Posterior vena cava (tissue), 2 donors: ENCODE measurements at regions of chr5 and their contacts with region 1.

Region 1: DNA sequence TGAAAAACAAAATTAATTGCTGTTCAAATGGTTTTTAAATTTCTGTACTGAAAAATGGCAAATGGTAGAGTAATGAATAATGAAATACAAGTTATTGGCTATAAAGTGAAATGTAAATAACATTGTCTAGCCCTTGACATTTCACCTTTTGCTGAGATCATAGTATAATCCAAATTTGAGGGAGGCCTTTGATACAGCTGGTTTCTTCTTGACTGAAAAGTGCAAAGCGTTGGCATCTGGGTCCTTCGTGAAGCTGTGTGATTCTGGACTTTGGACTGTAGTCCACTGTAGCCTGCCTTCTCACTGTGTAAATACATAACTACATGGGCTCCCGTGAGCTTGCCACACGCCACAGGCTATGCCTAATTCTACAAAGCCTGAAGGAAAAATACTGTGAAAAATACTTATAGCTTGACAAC is 52.3 kb downstream of the ARHGEF28 start:
- DNase-seq: no peak

Region 2: GRCh38 chr5:73701518-73701917 is 23.2 kb after region 1 on chr5:
- intact Hi-C with region 1: loop called in 1 of 2 experiments (anchors 1 kb)
- DNase-seq: no peak

Region 3: DNA sequence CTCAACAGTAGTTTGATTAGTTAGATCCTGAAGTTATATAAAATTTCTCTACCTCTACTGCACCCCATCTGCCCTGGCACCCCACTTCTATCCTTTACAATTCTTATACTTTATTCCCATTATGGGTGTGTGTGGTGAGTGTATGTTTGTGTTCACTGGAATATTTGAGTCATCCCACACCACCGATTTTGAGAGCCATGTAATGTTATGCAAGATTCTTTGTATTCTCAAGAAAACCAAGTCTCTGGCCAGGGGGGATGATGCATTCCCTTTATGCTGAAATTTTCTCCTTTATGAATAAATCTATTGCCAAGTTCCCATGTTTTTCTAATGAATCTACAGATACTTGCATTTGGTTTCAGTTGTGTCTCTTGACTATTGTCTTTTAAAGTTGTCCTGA is 214.5 kb after region 1 on chr5:
- intact Hi-C with region 1: no loop called
- DNase-seq: no peak

Region 4: DNA sequence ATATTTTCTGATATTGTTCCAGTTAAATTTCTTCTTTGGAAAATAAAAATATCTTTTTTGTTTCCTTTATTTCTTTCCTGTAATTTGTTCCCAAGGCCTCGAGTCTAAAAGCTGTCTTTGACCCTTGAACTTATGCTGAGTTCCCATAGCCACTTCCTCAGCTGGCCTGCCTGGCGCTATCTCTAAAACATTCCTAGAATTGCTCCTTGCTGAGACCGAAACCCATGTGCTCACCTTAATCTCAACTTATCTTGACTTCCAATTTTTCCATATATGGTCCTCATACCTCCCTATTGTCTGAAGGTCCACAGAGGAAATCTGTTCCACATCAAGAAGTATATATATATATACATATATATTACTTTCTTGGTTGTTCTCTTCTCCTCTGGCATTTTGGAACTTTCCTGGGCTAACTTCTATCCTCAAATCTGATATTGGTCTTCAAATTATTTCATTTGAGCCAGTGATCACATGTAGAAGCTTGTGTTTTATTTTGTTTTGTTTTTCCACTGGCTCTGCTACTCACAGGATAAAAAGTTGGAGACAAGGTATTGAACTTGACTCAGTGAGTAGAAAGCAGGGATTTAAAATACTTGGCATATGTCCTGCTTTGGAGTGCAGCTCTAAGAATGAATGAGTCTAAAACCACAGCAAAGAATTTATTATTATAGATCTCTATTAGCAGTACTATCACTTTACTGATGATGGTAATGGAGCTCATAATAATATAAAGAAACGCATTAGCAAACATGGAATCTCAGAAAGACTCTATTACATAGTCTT is 917.0 kb after region 1 on chr5:
- intact Hi-C with region 1: no loop called
- DNase-seq: no peak